ENCODE measurements at regions of chr6 and their contacts with region 1.

Region 1: DNA sequence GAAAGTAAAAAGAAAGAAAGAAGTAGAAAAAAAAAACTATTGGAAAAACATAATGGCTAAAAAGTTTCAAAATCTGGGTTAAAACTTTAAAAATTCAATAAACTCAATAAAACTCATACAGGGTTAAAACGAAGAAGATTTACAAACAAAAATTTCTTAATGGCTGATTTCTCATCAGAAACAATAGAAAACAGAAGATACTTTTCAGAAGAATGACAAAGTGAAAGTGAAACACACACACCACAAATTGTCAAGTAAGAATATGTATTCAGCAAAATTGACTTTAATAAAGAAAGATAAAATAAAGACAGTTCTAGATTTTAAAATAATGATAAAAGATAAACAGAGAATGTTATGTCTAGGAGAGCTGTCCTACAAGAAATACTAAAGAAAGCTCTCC is 618.9 kb upstream of the GJE1 start:
- DNase-seq: peak in 2 of 14 experiments; percentile 2 to 43
- ATAC-seq: no peak
- H3K4me3 ChIP-seq: no peak overlapping the region
- H3K4me3 Mint-ChIP-seq: no peak overlapping the region
- H3K27ac ChIP-seq: no peak overlapping the region
- H3K27ac Mint-ChIP-seq: no peak overlapping the region
- H3K4me1 ChIP-seq: no peaks in the 10 kb centered on the region
- H3K4me1 Mint-ChIP-seq: peaks cover 16% of the 10 kb centered on the region
- H3K27me3 ChIP-seq: no peaks in the 10 kb centered on the region
- H3K27me3 Mint-ChIP-seq: no peaks in the 10 kb centered on the region
- CTCF ChIP-seq: no peak

Region 2: GRCh38 chr6:141354191-141354955 is 159.5 kb before region 1 on chr6:
- CTCF ChIA-PET with region 1: no interaction called
- POLR2A ChIA-PET with region 1: no interaction called
- intact Hi-C with region 1: no loop called
- DNase-seq: no peak
- ATAC-seq: no peak
- H3K4me3 ChIP-seq: no peak overlapping the region
- H3K4me3 Mint-ChIP-seq: no peak overlapping the region
- H3K27ac ChIP-seq: no peak overlapping the region
- H3K27ac Mint-ChIP-seq: no peak overlapping the region
- H3K4me1 ChIP-seq: no peaks in the 10 kb centered on the region
- H3K4me1 Mint-ChIP-seq: no peaks in the 10 kb centered on the region
- H3K27me3 ChIP-seq: no peaks in the 10 kb centered on the region
- H3K27me3 Mint-ChIP-seq: no peaks in the 10 kb centered on the region
- CTCF ChIP-seq: no peak

Region 3: GRCh38 chr6:141443659-141444289 is 70.1 kb before region 1 on chr6:
- CTCF ChIA-PET with region 1: no interaction called
- POLR2A ChIA-PET with region 1: no interaction called
- intact Hi-C with region 1: loop called in 1 of 2 experiments (anchors 10 kb)
- DNase-seq: no peak
- ATAC-seq: no peak
- H3K4me3 ChIP-seq: no peak overlapping the region
- H3K4me3 Mint-ChIP-seq: no peak overlapping the region
- H3K27ac ChIP-seq: no peak overlapping the region
- H3K27ac Mint-ChIP-seq: no peak overlapping the region
- H3K4me1 ChIP-seq: no peaks in the 10 kb centered on the region
- H3K4me1 Mint-ChIP-seq: no peaks in the 10 kb centered on the region
- H3K27me3 ChIP-seq: no peaks in the 10 kb centered on the region
- H3K27me3 Mint-ChIP-seq: no peaks in the 10 kb centered on the region
- CTCF ChIP-seq: no peak

Region 4: DNA sequence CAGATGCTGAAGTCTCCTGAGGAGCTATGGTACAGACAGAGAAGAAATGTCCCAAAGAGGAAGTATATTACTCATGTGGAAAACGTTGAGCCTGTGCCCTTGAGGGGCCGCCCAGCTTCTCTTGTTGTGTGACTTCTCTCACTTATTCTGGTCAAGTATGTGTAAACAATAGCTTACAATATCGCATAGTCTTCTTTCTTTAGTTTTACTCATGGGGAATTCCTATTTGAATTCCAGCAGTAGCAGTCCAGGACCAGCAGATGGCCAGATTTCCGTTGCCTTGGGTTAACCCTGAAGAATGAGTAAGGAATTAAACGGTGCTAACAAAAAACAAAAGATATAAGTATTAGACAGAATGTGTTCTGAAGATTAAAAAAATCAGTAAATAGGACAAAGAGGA is 96.9 kb after region 1 on chr6:
- CTCF ChIA-PET with region 1: no interaction called
- POLR2A ChIA-PET with region 1: no interaction called
- intact Hi-C with region 1: no loop called
- DNase-seq: no peak
- ATAC-seq: no peak
- H3K4me3 ChIP-seq: no peak overlapping the region
- H3K4me3 Mint-ChIP-seq: no peak overlapping the region
- H3K27ac ChIP-seq: no peak overlapping the region
- H3K27ac Mint-ChIP-seq: no peak overlapping the region
- H3K4me1 ChIP-seq: no peaks in the 10 kb centered on the region
- H3K4me1 Mint-ChIP-seq: no peaks in the 10 kb centered on the region
- H3K27me3 ChIP-seq: no peaks in the 10 kb centered on the region
- H3K27me3 Mint-ChIP-seq: no peaks in the 10 kb centered on the region
- CTCF ChIP-seq: no peak

Region 5: GRCh38 chr6:141624301-141624700 is 110.5 kb after region 1 on chr6:
- CTCF ChIA-PET with region 1: no interaction called
- POLR2A ChIA-PET with region 1: no interaction called
- intact Hi-C with region 1: no loop called
- DNase-seq: no peak
- ATAC-seq: no peak
- H3K4me3 ChIP-seq: no peak overlapping the region
- H3K4me3 Mint-ChIP-seq: no peak overlapping the region
- H3K27ac ChIP-seq: no peak overlapping the region
- H3K27ac Mint-ChIP-seq: no peak overlapping the region
- H3K4me1 ChIP-seq: no peaks in the 10 kb centered on the region
- H3K4me1 Mint-ChIP-seq: no peaks in the 10 kb centered on the region
- H3K27me3 ChIP-seq: no peaks in the 10 kb centered on the region
- H3K27me3 Mint-ChIP-seq: peaks cover 18% of the 10 kb centered on the region
- CTCF ChIP-seq: no peak